Heart right ventricle (tissue), 16 donors: ENCODE measurements at regions of chr18 and their contacts with region 1.

Region 1: DNA sequence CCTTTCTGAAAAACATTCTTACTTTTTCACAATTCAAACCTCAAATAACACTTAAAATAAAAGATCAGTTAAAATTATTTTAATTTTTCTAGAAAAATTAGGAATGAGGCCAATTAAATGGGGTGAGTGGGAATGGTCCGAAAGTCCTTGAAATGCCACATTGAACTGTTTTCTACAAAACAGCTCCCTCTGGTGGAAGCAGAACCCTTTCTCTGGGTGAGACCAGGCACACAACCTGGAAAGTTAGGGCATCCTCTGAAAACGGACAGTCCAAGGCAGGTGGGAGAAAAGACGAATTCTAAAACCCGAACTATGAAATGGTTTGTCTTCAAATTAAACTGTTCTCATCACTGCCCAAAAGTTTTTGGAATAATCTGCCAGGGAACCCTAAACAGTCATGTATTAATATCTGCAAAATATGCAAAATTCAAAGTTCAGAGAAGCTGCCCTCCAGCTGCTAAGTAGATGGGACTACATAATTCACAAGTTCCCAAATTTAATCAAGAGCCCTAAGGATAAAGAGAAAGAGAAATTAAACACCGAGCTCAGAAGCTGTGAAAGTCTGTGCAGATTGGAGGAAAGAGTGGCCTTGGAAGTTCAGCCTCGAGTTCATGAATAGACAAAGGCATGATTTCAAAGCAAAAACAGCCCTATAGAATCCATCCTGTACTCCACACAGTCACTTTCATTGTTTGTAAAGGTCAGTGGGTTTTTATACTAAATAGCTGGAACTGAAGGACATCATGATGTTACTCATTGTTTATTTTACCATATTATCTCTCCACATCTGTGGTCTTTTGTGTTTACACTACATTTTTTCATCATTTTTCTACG is 108.3 kb downstream of the PIEZO2 start:
- DNase-seq: peak in 1 of 2 donors; percentile 62
- ATAC-seq: peak in 2 of 8 donors; percentile 62 to 72
- H3K4me3 ChIP-seq: no peak overlapping the region
- H3K27ac ChIP-seq: no peak overlapping the region
- H3K4me1 ChIP-seq: peaks cover 0 to 3% (median 0%) of the 10 kb centered on the region in 9 donors
- H3K27me3 ChIP-seq: peaks cover 0 to 12% (median 0%) of the 10 kb centered on the region in 7 donors
- CTCF ChIP-seq: peak; percentile 51 to 83 (median 77)

Region 2: DNA sequence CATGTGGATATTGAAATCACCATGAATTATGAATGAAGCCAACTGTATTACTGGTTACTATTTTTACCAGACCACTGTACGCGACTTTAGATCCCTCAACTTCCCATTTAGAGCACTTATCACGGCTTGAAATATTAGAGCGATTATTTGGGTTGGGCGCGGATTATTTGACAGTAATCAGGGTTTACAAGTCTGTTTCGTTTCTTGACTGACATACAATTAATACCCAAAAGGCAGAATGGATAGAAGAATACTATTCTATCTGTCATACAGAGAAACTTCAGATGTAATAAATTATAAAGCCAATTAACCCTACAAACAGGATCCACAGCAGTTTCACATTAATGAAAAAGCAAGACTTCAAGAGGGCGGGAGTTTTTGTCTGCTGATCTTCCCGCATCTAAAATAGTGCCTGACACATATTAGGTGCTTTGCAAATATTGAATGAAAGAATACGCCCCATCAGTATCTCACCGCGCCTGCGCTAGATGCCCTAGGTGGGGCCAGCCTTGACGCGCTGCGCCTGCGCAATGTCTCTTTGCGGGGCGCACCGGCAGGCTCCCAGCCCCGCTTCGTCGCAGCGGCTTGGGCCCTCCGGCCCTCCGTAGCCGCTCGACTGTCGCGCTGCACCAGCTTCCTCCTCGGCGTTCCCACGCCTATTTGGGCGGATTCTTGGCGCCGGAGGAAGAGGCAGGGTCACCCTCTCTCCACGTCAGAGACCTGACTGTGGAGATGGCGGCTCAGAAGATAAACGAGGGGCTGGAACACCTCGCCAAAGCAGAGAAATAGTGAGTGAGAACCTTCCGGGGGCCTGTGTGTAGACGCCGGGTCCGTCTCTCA is 515.4 kb before region 1 on chr18 and contains the start of gene NAPG:
- intact Hi-C with region 1: no loop called
- DNase-seq: peak; percentile 93 to 94
- ATAC-seq: peak; percentile 93 to 97 (median 96)
- H3K4me3 ChIP-seq: peak within 1 kb of the TSS; percentile 81 to 96 (median 90)
- H3K27ac ChIP-seq: peak within 1 kb of the TSS; percentile 96 to 99 (median 98)
- H3K4me1 ChIP-seq: peaks cover 3 to 51% (median 40%) of the 10 kb centered on the region in 9 donors
- H3K27me3 ChIP-seq: no peaks in the 10 kb centered on the region
- CTCF ChIP-seq: no peak
- total RNA-seq, gene NAPG: 30.5 to 49.9 (median 37.6) TPM

Region 3: DNA sequence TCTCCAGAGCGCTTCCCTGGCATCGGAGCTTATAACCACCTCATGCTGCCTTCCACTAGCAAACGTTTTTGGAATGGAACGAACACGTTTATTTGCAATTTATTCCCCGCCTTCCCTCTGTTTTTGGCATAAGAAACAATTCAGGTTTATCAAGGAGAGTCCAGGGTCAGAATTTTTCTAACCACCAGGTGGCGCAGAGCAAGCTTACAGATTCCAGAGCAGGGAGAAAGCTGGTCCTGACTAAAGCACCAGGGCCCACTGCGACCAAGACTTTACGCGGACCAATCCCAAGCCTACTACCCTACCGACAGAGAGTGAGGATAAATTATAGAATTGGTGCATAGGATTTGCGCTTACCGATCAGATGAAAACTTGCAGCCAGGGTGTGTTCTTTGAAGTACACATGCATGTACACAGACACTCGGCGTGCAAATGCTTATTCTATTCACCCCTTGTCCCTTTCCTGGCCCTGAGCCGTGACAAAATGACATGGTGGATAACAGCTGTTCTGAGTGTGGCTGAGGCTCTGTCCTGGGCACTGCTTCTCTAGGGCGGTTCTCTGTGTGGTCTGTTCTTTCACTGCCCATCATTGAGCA is 480.5 kb before region 1 on chr18:
- intact Hi-C with region 1: loop called in 2 of 10 experiments (anchors 5 kb)
- DNase-seq: peak; percentile 39 to 76
- ATAC-seq: peak; percentile 68 to 85 (median 79)
- H3K4me3 ChIP-seq: peak overlapping the region in 7 of 10 donors; percentile 13 to 45 (median 37)
- H3K27ac ChIP-seq: peak overlapping the region in 3 of 10 donors; percentile 31 to 57 (median 46)
- H3K4me1 ChIP-seq: peaks cover 0 to 18% (median 12%) of the 10 kb centered on the region in 9 donors
- H3K27me3 ChIP-seq: no peaks in the 10 kb centered on the region
- CTCF ChIP-seq: peak; percentile 64 to 82 (median 77)

Region 4: DNA sequence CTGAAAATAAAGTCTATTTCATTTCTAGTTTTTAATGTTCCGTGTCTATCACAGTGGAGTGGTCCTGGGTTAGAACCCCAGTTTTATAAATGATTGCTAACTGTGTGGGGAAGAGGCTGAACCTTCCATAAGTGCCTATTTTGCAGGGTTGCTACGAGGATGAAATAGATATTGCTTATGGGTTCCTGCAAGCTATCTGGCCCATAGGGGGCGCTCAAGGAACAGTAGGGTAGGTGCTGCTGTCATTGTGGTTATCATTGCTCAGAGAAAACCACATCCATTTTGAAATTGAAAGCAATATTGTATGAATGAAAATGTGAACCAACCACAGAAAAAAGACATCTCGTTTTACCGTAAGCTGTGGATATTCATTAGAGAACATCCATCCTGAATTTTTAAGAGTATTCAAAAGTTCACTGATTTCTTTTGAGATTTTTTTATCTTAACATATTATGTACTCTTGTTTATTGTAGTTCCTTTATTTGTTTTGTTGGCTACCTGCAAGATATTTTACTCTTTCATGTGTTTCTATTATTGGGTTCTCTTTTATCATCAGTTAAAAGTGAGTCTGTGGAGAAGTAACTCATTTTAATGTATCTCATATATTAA is 253.6 kb before region 1 on chr18:
- intact Hi-C with region 1: loop called in 4 of 10 experiments (anchors 5 to 10 kb)
- DNase-seq: peak; percentile 50 to 69
- ATAC-seq: peak in 1 of 8 donors; percentile 42
- H3K4me3 ChIP-seq: no peak overlapping the region
- H3K27ac ChIP-seq: no peak overlapping the region
- H3K4me1 ChIP-seq: peaks cover 0 to 20% (median 0%) of the 10 kb centered on the region in 9 donors
- H3K27me3 ChIP-seq: peaks cover 0 to 16% (median 7%) of the 10 kb centered on the region in 7 donors
- CTCF ChIP-seq: peak; percentile 24 to 89 (median 67)

Region 5: DNA sequence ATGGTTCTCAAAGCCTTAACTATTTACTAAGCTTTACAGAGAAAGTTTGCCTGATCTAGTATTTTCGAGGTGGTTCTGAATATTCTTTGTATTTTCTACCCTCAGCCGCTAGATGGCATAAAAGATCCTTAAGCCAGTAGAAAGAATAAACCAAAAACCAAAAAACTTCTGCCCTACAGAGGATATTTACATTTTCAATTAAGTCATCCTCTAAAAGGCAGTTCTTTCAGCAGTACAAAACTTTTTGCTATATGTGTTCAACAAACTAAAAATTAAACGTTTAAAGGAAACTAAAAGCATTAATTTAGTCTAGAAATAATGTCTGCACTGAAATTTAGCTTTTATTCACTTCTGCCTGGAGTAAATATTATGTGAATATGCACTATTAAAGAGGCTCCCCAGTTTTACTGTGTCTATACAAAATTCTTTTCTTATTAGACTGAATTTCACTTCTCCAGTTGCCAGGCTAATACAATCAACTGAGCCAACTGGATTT is 189.2 kb before region 1 on chr18:
- intact Hi-C with region 1: loop called (anchors 2 to 5 kb)
- DNase-seq: no peak
- ATAC-seq: no peak
- H3K4me3 ChIP-seq: no peak overlapping the region
- H3K27ac ChIP-seq: no peak overlapping the region
- H3K4me1 ChIP-seq: no peaks in the 10 kb centered on the region
- H3K27me3 ChIP-seq: peaks cover 0 to 19% (median 0%) of the 10 kb centered on the region in 7 donors
- CTCF ChIP-seq: peak; percentile 46 to 85 (median 74)